Calu3 (cell line): ENCODE measurements at regions of chr9 and their contacts with region 1.

Region 1: GRCh38 chr9:80951675-80952074 is 737.7 kb downstream of the TLE1 start:
- DNase-seq: no peak
- H3K4me3 Mint-ChIP-seq: no peak overlapping the region
- H3K27ac Mint-ChIP-seq: no peak overlapping the region
- H3K4me1 Mint-ChIP-seq: no peaks in the 10 kb centered on the region
- H3K27me3 Mint-ChIP-seq: no peaks in the 10 kb centered on the region
- CTCF ChIP-seq: no peak

Region 2: GRCh38 chr9:81002242-81002641 is 50.6 kb after region 1 on chr9:
- CTCF ChIA-PET with region 1: no interaction called
- intact Hi-C with region 1: loop called (anchors 10 kb)
- DNase-seq: peak; percentile 28
- H3K4me3 Mint-ChIP-seq: no peak overlapping the region
- H3K27ac Mint-ChIP-seq: no peak overlapping the region
- H3K4me1 Mint-ChIP-seq: peaks cover 7% of the 10 kb centered on the region
- H3K27me3 Mint-ChIP-seq: no peaks in the 10 kb centered on the region
- CTCF ChIP-seq: no peak

Region 3: DNA sequence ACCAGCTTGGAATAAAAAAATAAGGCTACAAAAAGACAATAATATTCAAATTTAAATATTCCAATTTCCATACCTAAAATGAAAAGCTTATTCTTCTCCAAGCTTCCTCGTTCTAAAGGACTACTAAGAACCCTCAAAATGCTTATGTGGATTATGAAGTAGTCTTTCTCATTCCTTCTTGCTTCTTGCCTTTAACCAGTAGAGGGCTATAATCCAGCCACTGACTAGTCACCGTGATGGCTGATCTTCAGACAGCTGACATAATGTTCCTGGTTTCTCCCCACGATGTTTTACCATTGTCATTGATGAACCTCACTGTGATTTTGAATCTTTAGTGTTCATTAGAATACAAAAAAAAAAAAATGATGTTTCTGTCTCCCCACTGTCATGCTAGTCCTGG is 222.4 kb after region 1 on chr9:
- CTCF ChIA-PET with region 1: no interaction called
- intact Hi-C with region 1: no loop called
- DNase-seq: no peak
- H3K4me3 Mint-ChIP-seq: no peak overlapping the region
- H3K27ac Mint-ChIP-seq: no peak overlapping the region
- H3K4me1 Mint-ChIP-seq: no peaks in the 10 kb centered on the region
- H3K27me3 Mint-ChIP-seq: no peaks in the 10 kb centered on the region
- CTCF ChIP-seq: no peak